PC-3 (cell line): ENCODE measurements at regions of chr6 and their contacts with region 1.

Region 1: GRCh38 chr6:141183368-141183767 is 949.4 kb upstream of the GJE1 start:
- DNase-seq: no peak
- ATAC-seq: no peak
- H3K4me3 ChIP-seq: no peak overlapping the region
- H3K27ac ChIP-seq: no peak overlapping the region
- H3K4me1 ChIP-seq: no peaks in the 10 kb centered on the region
- H3K27me3 ChIP-seq: no peaks in the 10 kb centered on the region
- CTCF ChIP-seq: no peak

Region 2: GRCh38 chr6:140979642-140980091 is 203.7 kb before region 1 on chr6:
- CTCF ChIA-PET with region 1: no interaction called
- POLR2A ChIA-PET with region 1: no interaction called
- intact Hi-C with region 1: no loop called
- DNase-seq: no peak
- ATAC-seq: no peak
- H3K4me3 ChIP-seq: no peak overlapping the region
- H3K27ac ChIP-seq: no peak overlapping the region
- H3K4me1 ChIP-seq: 0 out of 2 replicates have a peak, but pooled peaks cover 6% of the 10 kb centered on the region
- H3K27me3 ChIP-seq: no peaks in the 10 kb centered on the region
- CTCF ChIP-seq: no peak

Region 3: GRCh38 chr6:141164042-141164736 is 19.2 kb before region 1 on chr6:
- CTCF ChIA-PET with region 1: no interaction called
- POLR2A ChIA-PET with region 1: interaction called, 20 read pairs
- intact Hi-C with region 1: no loop called
- DNase-seq: peak; percentile 18
- ATAC-seq: no peak
- H3K4me3 ChIP-seq: no peak overlapping the region
- H3K27ac ChIP-seq: no peak overlapping the region
- H3K4me1 ChIP-seq: no peaks in the 10 kb centered on the region
- H3K27me3 ChIP-seq: no peaks in the 10 kb centered on the region
- CTCF ChIP-seq: no peak

Region 4: DNA sequence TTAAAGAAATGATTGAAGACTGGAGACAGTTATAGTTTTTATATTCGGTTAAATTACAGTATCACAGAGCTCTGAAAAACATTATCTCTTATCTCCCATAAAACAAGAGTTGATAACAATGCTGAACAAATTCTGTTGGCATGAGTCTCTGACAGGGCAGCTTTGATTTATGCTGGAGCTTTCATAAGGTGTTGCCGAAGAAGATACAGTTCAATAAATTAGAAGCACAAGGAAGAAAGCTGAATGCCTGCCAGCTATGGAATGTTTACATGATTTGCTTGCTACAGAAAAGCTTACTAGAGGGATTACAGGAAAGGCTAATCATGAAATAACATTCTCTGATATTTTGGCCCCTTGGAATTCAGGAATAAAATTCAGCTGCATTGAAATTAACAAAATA is 517.5 kb after region 1 on chr6:
- CTCF ChIA-PET with region 1: no interaction called
- POLR2A ChIA-PET with region 1: no interaction called
- intact Hi-C with region 1: no loop called
- DNase-seq: no peak
- ATAC-seq: no peak
- H3K4me3 ChIP-seq: no peak overlapping the region
- H3K27ac ChIP-seq: no peak overlapping the region
- H3K4me1 ChIP-seq: no peaks in the 10 kb centered on the region
- H3K27me3 ChIP-seq: no peaks in the 10 kb centered on the region
- CTCF ChIP-seq: no peak